ENCODE measurements at regions of chr19 and their contacts with region 1.

Region 1: GRCh38 chr19:16969127-16969526 is 57.5 kb downstream of the CPAMD8 start:
- DNase-seq: no peak
- H3K4me3 ChIP-seq: no peak overlapping the region
- CTCF ChIP-seq: no peak

Region 2: GRCh38 chr19:16829010-16829821 is 139.9 kb before region 1 on chr19 and contains the start of gene SIN3B:
- in situ Hi-C with region 1: loop called (anchors 10 kb)
- DNase-seq: peak; percentile 63
- H3K4me3 ChIP-seq: peak within 1 kb of the TSS; percentile 95
- CTCF ChIP-seq: no peak

Region 3: GRCh38 chr19:17035842-17036424 is 66.8 kb after region 1 on chr19:
- in situ Hi-C with region 1: loop called (anchors 10 kb)
- DNase-seq: no peak
- H3K4me3 ChIP-seq: no peak overlapping the region
- CTCF ChIP-seq: no peak

Region 4: GRCh38 chr19:17075035-17075863 is 106.1 kb after region 1 on chr19 and contains the starts of genes HAUS8 and MYO9B:
- in situ Hi-C with region 1: no loop called
- DNase-seq: peak; percentile 97
- H3K4me3 ChIP-seq: peak within 1 kb of the TSS; percentile 84
- CTCF ChIP-seq: no peak